CD4-positive, alpha-beta memory T cell (primary cell): ENCODE measurements at regions of chr9 and their contacts with region 1.

Region 1: GRCh38 chr9:121350993-121351561 is 19.0 kb downstream of the STOM start:
- DNase-seq: no peak
- H3K4me3 ChIP-seq: no peak overlapping the region
- H3K4me3 Mint-ChIP-seq: no peak overlapping the region
- H3K27ac ChIP-seq: no peak overlapping the region
- H3K27ac Mint-ChIP-seq: peak overlapping the region in 1 of 7 donors; percentile 18
- H3K4me1 ChIP-seq: peaks cover 55% of the 10 kb centered on the region
- H3K4me1 Mint-ChIP-seq: peaks cover 27 to 54% (median 41%) of the 10 kb centered on the region in 4 donors
- H3K27me3 ChIP-seq: no peaks in the 10 kb centered on the region
- H3K27me3 Mint-ChIP-seq: no peaks in the 10 kb centered on the region

Region 2: DNA sequence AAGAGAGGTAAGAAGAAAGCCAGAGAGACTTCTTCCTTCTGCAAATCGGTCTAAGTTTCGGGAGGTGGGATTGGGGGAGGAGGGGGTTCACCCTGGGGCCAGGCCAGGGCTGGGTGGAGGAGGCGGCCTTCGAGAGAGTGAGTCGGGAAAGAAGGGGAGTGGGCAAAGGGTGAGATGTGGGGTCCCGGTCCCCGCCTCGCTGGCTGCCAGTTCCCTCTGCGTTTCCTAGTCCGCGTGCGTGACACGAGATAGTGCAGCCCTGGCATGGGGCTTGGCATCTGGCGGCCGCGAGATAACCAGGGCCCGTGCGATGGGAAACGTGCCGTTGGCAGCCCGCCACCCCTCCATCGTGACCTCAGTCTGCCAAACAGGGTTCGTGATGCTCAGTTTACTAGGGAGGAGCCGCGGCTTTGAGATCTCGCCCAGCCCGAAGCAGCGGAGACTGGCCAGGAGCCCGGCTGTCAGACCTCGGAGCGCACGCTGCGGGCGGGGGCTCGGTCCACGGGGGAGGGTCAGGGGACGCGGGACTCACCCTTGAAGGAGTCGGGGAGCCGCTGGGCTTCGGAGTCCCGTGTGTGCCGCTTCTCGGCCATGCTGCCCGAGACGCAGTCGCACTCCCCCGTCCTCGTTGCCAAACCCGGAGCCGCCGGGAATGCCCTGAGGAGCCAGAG is 18.7 kb after region 1 on chr9 and contains the start of gene STOM:
- CTCF ChIA-PET with region 1: interaction called, 15 read pairs
- POLR2A ChIA-PET with region 1: interaction called, 131 read pairs
- intact Hi-C with region 1: loop called (anchors 1 kb)
- DNase-seq: peak in 4 of 5 donors; percentile 75 to 86 (median 78)
- H3K4me3 ChIP-seq: peak within 1 kb of the TSS; percentile 72 to 80
- H3K4me3 Mint-ChIP-seq: peak within 1 kb of the TSS; percentile 89 to 98 (median 96)
- H3K27ac ChIP-seq: peak within 1 kb of the TSS; percentile 79
- H3K27ac Mint-ChIP-seq: peak within 1 kb of the TSS; percentile 78 to 99 (median 96)
- H3K4me1 ChIP-seq: peaks cover 50% of the 10 kb centered on the region
- H3K4me1 Mint-ChIP-seq: peaks cover 38 to 74% (median 50%) of the 10 kb centered on the region in 4 donors
- H3K27me3 ChIP-seq: no peaks in the 10 kb centered on the region
- H3K27me3 Mint-ChIP-seq: no peaks in the 10 kb centered on the region
- total RNA-seq, gene STOM: 81.2 to 82.8 TPM

Region 3: DNA sequence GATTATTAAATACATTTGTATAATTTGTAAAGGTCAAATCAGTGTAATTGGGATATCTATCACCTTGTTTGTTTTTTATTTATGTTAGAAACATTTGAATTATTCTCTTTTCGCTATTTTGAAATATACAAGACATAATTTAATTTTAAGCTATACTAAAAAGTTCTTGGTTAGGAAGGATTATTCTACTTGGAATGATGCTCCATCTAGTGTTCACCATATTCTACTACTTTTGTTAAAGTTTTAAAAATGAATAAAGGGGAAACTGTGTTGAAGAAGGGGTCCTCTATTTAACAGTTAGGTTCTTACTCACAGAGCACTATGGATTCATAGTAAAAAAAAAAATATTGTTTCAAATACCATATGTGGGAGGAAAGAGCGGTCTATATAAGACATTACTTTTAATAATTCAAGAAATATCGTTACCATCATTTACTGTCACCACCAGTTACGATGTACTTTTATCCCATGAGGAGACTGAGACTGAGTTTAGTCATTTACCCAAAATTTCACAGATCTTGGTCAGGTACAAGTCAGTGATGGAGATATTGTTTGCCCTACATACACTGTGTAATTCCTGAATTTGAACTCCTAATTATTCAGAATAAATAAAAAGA is 25.2 kb after region 1 on chr9:
- CTCF ChIA-PET with region 1: interaction called, 15 read pairs
- POLR2A ChIA-PET with region 1: interaction called, 7 read pairs
- intact Hi-C with region 1: no loop called
- DNase-seq: peak in 3 of 5 donors; percentile 24 to 30 (median 29)
- H3K4me3 ChIP-seq: no peak overlapping the region
- H3K4me3 Mint-ChIP-seq: no peak overlapping the region
- H3K27ac ChIP-seq: no peak overlapping the region
- H3K27ac Mint-ChIP-seq: no peak overlapping the region
- H3K4me1 ChIP-seq: peaks cover 3% of the 10 kb centered on the region
- H3K4me1 Mint-ChIP-seq: peaks cover 9 to 21% (median 10%) of the 10 kb centered on the region in 4 donors
- H3K27me3 ChIP-seq: no peaks in the 10 kb centered on the region
- H3K27me3 Mint-ChIP-seq: no peaks in the 10 kb centered on the region